GM12878 (cell line): ENCODE measurements at regions of chr16 and their contacts with region 1.

Region 1: GRCh38 chr16:75110637-75111513 is 5.7 kb downstream of the LDHD start:
- DNase-seq: peak; percentile 62
- ATAC-seq: peak; percentile 92
- H3K4me3 ChIP-seq: no peak overlapping the region
- H3K27ac ChIP-seq: no peak overlapping the region; the same call in 1 of the 2 replicates
- H3K4me1 ChIP-seq: peaks cover 36% of the 10 kb centered on the region
- H3K27me3 ChIP-seq: no peaks in the 10 kb centered on the region
- CTCF ChIP-seq: peak; percentile 95 to 97 (median 96)
- EP300 ChIP-seq: no peak
- POLR2A ChIP-seq: 0 out of 2 replicates have a peak, but pooled peaks have one; percentile 29
- RAD21 ChIP-seq: peak; percentile 97

Region 2: GRCh38 chr16:74700438-74701225 is 410.2 kb before region 1 on chr16 and contains the start of gene MLKL:
- CTCF ChIA-PET with region 1: interaction called, 6 read pairs
- POLR2A ChIA-PET with region 1: interaction called, 3 read pairs
- RAD21 ChIA-PET with region 1: no interaction called
- SMC1A ChIA-PET with region 1: no interaction called
- in situ Hi-C with region 1: loop called (anchors 5 kb)
- intact Hi-C with region 1: no loop called
- DNase-seq: peak; percentile 11
- ATAC-seq: peak; percentile 78
- H3K4me3 ChIP-seq: peak within 1 kb of the TSS; percentile 79
- H3K27ac ChIP-seq: peak within 1 kb of the TSS; percentile 97
- H3K4me1 ChIP-seq: peaks cover 9% of the 10 kb centered on the region
- H3K27me3 ChIP-seq: no peaks in the 10 kb centered on the region
- CTCF ChIP-seq: peak in 1 of 3 experiments; percentile 1; a peak in 1 of 6 replicates
- EP300 ChIP-seq: no peak
- POLR2A ChIP-seq: peak; percentile 82
- RAD21 ChIP-seq: no peak
- polyA plus RNA-seq, gene MLKL: 3.8 to 5.2 TPM

Region 3: GRCh38 chr16:74874912-74875546 is 235.8 kb before region 1 on chr16:
- CTCF ChIA-PET with region 1: interaction called, 4 read pairs
- POLR2A ChIA-PET with region 1: no interaction called
- RAD21 ChIA-PET with region 1: no interaction called
- SMC1A ChIA-PET with region 1: no interaction called
- in situ Hi-C with region 1: no loop called
- intact Hi-C with region 1: loop called (anchors 5 kb)
- DNase-seq: no peak
- ATAC-seq: no peak
- H3K4me3 ChIP-seq: no peak overlapping the region
- H3K27ac ChIP-seq: no peak overlapping the region
- H3K4me1 ChIP-seq: no peaks in the 10 kb centered on the region
- H3K27me3 ChIP-seq: no peaks in the 10 kb centered on the region
- CTCF ChIP-seq: no peak
- EP300 ChIP-seq: no peak
- POLR2A ChIP-seq: no peak
- RAD21 ChIP-seq: no peak

Region 4: DNA sequence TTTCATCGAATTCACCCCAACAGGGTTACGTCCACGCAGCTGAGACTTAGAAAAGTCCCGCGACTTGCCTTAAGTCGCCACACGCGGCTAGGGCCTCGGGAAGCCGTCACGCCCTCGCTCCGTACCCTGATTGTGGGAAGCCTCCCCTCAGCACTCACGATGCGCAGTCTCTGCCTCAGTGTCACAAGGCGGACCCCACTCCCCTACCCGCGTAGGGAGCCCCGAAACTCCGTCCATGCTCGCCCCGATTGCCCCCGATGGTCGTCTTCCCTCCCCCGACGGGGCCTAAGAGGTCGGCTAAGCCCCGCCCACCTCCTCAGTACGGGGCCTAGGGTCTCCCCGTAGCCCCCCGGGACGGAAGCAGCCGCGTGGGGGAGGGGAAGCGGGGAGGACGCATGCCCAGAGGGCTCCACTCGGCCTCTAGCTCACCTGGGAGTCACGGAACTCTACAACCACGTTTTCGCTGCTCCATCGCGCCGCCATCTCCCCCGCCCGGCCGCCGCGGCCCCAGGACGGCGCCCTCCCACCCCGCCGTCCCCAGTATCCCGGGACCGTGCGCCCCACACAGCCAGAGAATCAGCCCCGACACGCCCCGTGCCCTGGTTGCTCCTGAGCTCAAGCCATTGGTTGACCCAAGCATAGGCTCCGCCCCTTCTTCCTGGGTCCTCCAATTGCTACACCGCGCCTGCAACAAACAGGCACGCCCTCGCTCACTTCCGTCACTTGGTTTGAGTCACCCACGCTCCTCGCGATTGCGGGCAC is 126.2 kb before region 1 on chr16 and contains the start of gene WDR59:
- CTCF ChIA-PET with region 1: interaction called, 18 read pairs
- POLR2A ChIA-PET with region 1: no interaction called
- RAD21 ChIA-PET with region 1: interaction called, 28 read pairs
- SMC1A ChIA-PET with region 1: interaction called, 3 read pairs
- in situ Hi-C with region 1: no loop called
- intact Hi-C with region 1: no loop called
- DNase-seq: peak; percentile 96
- ATAC-seq: peak; percentile 99
- H3K4me3 ChIP-seq: peak within 1 kb of the TSS; percentile 99
- H3K27ac ChIP-seq: peak within 1 kb of the TSS; percentile 92
- H3K4me1 ChIP-seq: no peaks in the 10 kb centered on the region; the same call in 1 of the 2 replicates
- H3K27me3 ChIP-seq: no peaks in the 10 kb centered on the region
- CTCF ChIP-seq: no peak
- EP300 ChIP-seq: no peak
- POLR2A ChIP-seq: peak; percentile 83
- RAD21 ChIP-seq: no peak
- polyA plus RNA-seq, gene WDR59: 9.7 to 11.5 TPM

Region 5: GRCh38 chr16:75011634-75012307 is 99.1 kb before region 1 on chr16:
- CTCF ChIA-PET with region 1: interaction called, 38 read pairs
- POLR2A ChIA-PET with region 1: interaction called, 4 read pairs
- RAD21 ChIA-PET with region 1: interaction called, 46 read pairs
- SMC1A ChIA-PET with region 1: interaction called, 25 read pairs
- in situ Hi-C with region 1: no loop called
- intact Hi-C with region 1: no loop called
- DNase-seq: peak; percentile 92
- ATAC-seq: peak; percentile 91
- H3K4me3 ChIP-seq: peak overlapping the region; percentile 60
- H3K27ac ChIP-seq: peak overlapping the region; percentile 96
- H3K4me1 ChIP-seq: peaks cover 47% of the 10 kb centered on the region
- H3K27me3 ChIP-seq: no peaks in the 10 kb centered on the region
- CTCF ChIP-seq: no peak
- EP300 ChIP-seq: peak; percentile 89
- POLR2A ChIP-seq: peak; percentile 64
- RAD21 ChIP-seq: no peak

Region 6: GRCh38 chr16:75121949-75122568 is 11.2 kb after region 1 on chr16:
- CTCF ChIA-PET with region 1: interaction called, 23 read pairs
- POLR2A ChIA-PET with region 1: no interaction called
- RAD21 ChIA-PET with region 1: interaction called, 5 read pairs
- SMC1A ChIA-PET with region 1: interaction called, 10 read pairs
- in situ Hi-C with region 1: no loop called
- intact Hi-C with region 1: no loop called
- DNase-seq: no peak
- ATAC-seq: no peak
- H3K4me3 ChIP-seq: no peak overlapping the region
- H3K27ac ChIP-seq: no peak overlapping the region
- H3K4me1 ChIP-seq: no peaks in the 10 kb centered on the region
- H3K27me3 ChIP-seq: no peaks in the 10 kb centered on the region
- CTCF ChIP-seq: no peak
- EP300 ChIP-seq: no peak
- POLR2A ChIP-seq: no peak
- RAD21 ChIP-seq: no peak